ENCODE measurements at regions of chr7 and their contacts with region 1.

Region 1: DNA sequence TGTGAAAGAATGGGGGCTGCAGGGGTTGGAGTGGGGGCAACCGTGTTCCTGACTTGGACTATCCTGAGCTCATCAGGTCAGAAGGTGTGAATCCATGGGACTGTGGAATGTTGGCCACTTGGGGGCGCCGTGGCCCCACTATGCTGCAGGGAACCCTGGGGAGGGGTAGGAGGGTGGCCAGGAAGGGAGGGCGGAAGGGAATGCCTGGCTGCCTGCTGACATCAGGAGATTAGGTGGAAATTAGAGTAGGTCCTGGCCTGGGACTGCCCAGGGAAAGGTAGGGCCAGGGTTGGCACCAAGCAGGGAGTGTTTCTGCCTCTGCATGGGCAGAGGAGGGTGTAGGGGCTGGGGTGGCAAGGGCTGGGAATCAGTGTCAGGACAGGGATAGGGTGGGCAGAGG is 65.8 kb upstream of the PRSS58 start:
- DNase-seq: peak; percentile 73
- ATAC-seq: peak; percentile 56
- H3K4me3 Mint-ChIP-seq: peak overlapping the region; percentile 6
- H3K27ac Mint-ChIP-seq: no peak overlapping the region
- H3K4me1 Mint-ChIP-seq: peaks cover 25% of the 10 kb centered on the region
- H3K27me3 Mint-ChIP-seq: peaks cover 2% of the 10 kb centered on the region

Region 2: GRCh38 chr7:141541375-141541774 is 782.3 kb before region 1 on chr7:
- CTCF ChIA-PET with region 1: no interaction called
- POLR2A ChIA-PET with region 1: no interaction called
- intact Hi-C with region 1: no loop called
- DNase-seq: no peak
- ATAC-seq: no peak
- H3K4me3 Mint-ChIP-seq: no peak overlapping the region
- H3K27ac Mint-ChIP-seq: no peak overlapping the region
- H3K4me1 Mint-ChIP-seq: no peaks in the 10 kb centered on the region
- H3K27me3 Mint-ChIP-seq: peaks cover 14% of the 10 kb centered on the region

Region 3: GRCh38 chr7:142301923-142302550 is 21.7 kb before region 1 on chr7:
- CTCF ChIA-PET with region 1: interaction called, 58 read pairs
- POLR2A ChIA-PET with region 1: no interaction called
- intact Hi-C with region 1: no loop called
- DNase-seq: no peak
- ATAC-seq: no peak
- H3K4me3 Mint-ChIP-seq: no peak overlapping the region
- H3K27ac Mint-ChIP-seq: no peak overlapping the region
- H3K4me1 Mint-ChIP-seq: peaks cover 29% of the 10 kb centered on the region
- H3K27me3 Mint-ChIP-seq: peaks cover 8% of the 10 kb centered on the region

Region 4: DNA sequence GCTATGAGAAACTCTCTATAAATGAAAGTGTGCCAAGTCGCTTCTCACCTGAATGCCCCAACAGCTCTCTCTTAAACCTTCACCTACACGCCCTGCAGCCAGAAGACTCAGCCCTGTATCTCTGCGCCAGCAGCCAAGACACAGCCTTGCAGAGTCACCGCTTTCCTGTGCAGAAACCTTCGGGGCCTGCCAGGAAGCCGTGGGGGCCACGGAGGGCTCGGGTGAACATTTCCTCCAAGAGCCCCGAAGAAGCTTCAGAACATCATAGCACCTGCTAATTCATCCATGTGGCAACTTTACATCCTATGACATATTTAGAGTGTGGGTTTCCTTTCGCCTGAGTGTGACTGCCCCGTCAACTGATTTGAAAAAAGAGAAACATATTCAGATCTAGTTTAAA is 10.2 kb before region 1 on chr7:
- CTCF ChIA-PET with region 1: interaction called, 17 read pairs
- POLR2A ChIA-PET with region 1: interaction called, 3 read pairs
- intact Hi-C with region 1: no loop called
- DNase-seq: peak; percentile 63
- ATAC-seq: peak; percentile 82
- H3K4me3 Mint-ChIP-seq: peak overlapping the region; percentile 55
- H3K27ac Mint-ChIP-seq: peak overlapping the region; percentile 37
- H3K4me1 Mint-ChIP-seq: peaks cover 13% of the 10 kb centered on the region
- H3K27me3 Mint-ChIP-seq: peaks cover 13% of the 10 kb centered on the region

Region 5: GRCh38 chr7:142338633-142339501 is 15.2 kb after region 1 on chr7:
- CTCF ChIA-PET with region 1: interaction called, 14 read pairs
- POLR2A ChIA-PET with region 1: interaction called, 4 read pairs
- intact Hi-C with region 1: no loop called
- DNase-seq: peak; percentile 57
- ATAC-seq: peak; percentile 43
- H3K4me3 Mint-ChIP-seq: peak overlapping the region; percentile 14
- H3K27ac Mint-ChIP-seq: peak overlapping the region; percentile 68
- H3K4me1 Mint-ChIP-seq: peaks cover 16% of the 10 kb centered on the region
- H3K27me3 Mint-ChIP-seq: peaks cover 5% of the 10 kb centered on the region

Region 6: DNA sequence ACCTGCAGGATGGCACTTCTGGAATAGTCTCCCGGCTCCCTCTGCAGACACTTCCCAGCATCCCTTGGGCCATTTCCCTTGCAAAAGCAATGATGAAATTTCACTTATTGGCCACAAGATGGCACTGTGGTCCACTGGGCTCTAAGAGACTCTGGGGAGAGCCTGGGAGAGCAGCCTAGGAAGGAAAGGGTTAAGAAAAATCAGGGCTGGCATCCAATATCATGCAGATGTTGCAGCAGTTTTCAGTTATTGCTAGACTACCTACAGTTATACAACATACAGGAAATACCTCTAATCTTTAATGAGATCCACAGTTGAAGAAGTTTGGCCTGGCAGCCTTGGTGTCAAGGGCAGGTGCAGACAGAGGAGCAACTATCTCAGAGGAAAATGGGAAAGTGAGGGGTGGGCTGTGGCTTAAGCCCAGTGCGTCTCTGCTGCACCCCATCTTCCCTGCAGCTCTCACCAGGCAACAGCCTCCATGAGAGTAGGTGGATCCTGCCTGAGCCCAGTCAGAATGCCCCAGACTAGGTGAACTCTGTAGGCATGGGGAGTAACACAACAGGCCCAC is 34.3 kb after region 1 on chr7:
- CTCF ChIA-PET with region 1: interaction called, 19 read pairs
- POLR2A ChIA-PET with region 1: no interaction called
- intact Hi-C with region 1: no loop called
- DNase-seq: peak; percentile 57
- ATAC-seq: peak; percentile 80
- H3K4me3 Mint-ChIP-seq: no peak overlapping the region
- H3K27ac Mint-ChIP-seq: no peak overlapping the region
- H3K4me1 Mint-ChIP-seq: peaks cover 33% of the 10 kb centered on the region
- H3K27me3 Mint-ChIP-seq: peaks cover 4% of the 10 kb centered on the region

Region 7: GRCh38 chr7:142796608-142797385 is 473.1 kb after region 1 on chr7:
- CTCF ChIA-PET with region 1: no interaction called
- POLR2A ChIA-PET with region 1: interaction called, 3 read pairs
- intact Hi-C with region 1: loop called (anchors 1 kb)
- DNase-seq: peak; percentile 41
- ATAC-seq: no peak
- H3K4me3 Mint-ChIP-seq: peak overlapping the region; percentile 99
- H3K27ac Mint-ChIP-seq: peak overlapping the region; percentile 99
- H3K4me1 Mint-ChIP-seq: peaks cover 59% of the 10 kb centered on the region
- H3K27me3 Mint-ChIP-seq: no peaks in the 10 kb centered on the region

Region 8: DNA sequence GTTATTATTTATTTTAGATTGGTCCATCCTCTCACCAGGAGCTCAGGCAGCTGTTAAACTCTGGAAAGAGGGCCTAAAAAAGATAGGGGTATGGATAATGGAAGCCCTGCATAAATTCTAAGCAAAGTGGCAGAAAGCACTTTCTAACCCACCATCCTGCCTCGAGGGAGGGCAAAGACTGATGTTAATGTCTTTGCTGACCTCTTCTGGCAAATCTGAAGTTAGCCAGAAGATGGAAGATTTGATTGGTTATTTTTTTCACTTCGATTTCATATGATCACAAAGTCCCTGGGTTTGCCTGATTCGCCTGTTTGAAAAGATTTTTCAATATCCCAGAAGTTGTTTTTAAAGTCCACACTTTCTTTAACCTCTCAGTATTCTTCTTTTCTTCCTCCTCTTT is 678.4 kb after region 1 on chr7:
- CTCF ChIA-PET with region 1: interaction called, 9 read pairs
- POLR2A ChIA-PET with region 1: no interaction called
- intact Hi-C with region 1: loop called in 1 of 2 experiments (anchors 1 kb)
- DNase-seq: no peak
- ATAC-seq: no peak
- H3K4me3 Mint-ChIP-seq: no peak overlapping the region
- H3K27ac Mint-ChIP-seq: no peak overlapping the region
- H3K4me1 Mint-ChIP-seq: peaks cover 5% of the 10 kb centered on the region
- H3K27me3 Mint-ChIP-seq: no peaks in the 10 kb centered on the region